A549 (cell line): ENCODE measurements at regions of chr3 and their contacts with region 1.

Region 1: GRCh38 chr3:45656575-45657363 is 32.4 kb upstream of the SACM1L start:
- DNase-seq: peak; percentile 87 to 95
- ATAC-seq: peak; percentile 89 to 91
- H3K4me3 ChIP-seq: no peak overlapping the region
- H3K27ac ChIP-seq: peak overlapping the region; percentile 71 to 86
- H3K4me1 ChIP-seq: peaks cover 64% of the 10 kb centered on the region
- CTCF ChIP-seq: peak; percentile 79
- EP300 ChIP-seq: no peak; a peak in 1 of 5 replicates
- POLR2A ChIP-seq: no peak
- RAD21 ChIP-seq: peak; percentile 93 to 96

Region 2: GRCh38 chr3:45507820-45508317 is 148.9 kb before region 1 on chr3:
- CTCF ChIA-PET with region 1: interaction called, 51 read pairs
- POLR2A ChIA-PET with region 1: no interaction called
- DNase-seq: peak in 1 of 2 experiments; percentile 27
- ATAC-seq: peak; percentile 69 to 82; a peak in 5 of 6 replicates
- H3K4me3 ChIP-seq: no peak overlapping the region
- H3K27ac ChIP-seq: no peak overlapping the region
- H3K4me1 ChIP-seq: 0 out of 3 replicates have a peak, but pooled peaks cover 7% of the 10 kb centered on the region
- CTCF ChIP-seq: no peak
- EP300 ChIP-seq: no peak
- POLR2A ChIP-seq: no peak
- RAD21 ChIP-seq: no peak; a peak in 1 of 5 replicates

Region 3: DNA sequence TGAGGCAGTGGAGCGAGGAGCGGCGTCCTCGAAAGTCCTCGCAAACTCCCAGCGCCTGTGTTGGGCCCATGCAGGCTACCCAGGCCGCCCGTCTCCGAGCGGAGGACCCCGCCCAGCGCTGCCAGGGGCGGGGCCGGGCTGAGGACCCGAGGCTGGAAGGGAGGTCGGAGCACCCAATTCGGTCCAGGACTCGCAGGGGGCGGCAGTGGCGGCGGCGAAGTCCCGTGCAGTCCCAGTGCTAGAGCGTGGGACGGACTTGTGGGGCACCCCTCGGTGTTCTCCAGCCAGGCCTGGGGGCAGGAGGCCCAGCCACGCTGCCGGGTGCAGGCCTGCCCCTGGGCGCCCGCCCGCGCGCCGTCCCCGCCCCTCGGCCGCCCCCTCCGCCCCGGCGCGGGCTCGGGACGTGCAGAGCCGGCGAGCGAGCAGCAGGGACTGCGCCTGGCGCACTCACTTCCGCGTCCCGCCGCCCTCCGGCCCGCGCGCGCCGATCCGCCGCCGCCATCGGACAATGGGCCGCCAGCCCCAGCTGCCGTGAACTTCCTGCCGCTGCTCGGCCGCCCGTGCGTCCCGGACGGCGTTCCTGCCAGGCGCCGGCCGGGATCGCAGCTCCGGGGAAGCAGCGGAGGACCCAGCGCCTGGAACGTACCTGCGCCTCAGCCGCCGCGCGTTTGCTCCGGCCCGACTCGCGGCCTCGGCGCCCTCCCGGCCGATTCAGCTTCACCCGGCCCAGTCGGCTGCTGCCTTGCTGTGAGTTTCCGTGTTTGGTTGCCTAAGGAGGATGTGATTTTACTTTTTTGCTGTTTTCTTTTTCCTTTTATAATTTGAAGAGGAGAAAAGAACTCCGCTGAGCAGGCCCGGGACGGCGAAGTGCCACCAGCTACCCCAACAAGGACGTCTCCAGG is 62.8 kb before region 1 on chr3:
- CTCF ChIA-PET with region 1: interaction called, 70 read pairs
- POLR2A ChIA-PET with region 1: interaction called, 5 read pairs
- DNase-seq: peak; percentile 56 to 80
- ATAC-seq: peak; percentile 84 to 86
- H3K4me3 ChIP-seq: peak overlapping the region; percentile 63
- H3K27ac ChIP-seq: peak overlapping the region; percentile 89 to 94
- H3K4me1 ChIP-seq: peaks cover 32% of the 10 kb centered on the region
- CTCF ChIP-seq: no peak
- EP300 ChIP-seq: no peak
- POLR2A ChIP-seq: peak; percentile 48
- RAD21 ChIP-seq: no peak

Region 4: DNA sequence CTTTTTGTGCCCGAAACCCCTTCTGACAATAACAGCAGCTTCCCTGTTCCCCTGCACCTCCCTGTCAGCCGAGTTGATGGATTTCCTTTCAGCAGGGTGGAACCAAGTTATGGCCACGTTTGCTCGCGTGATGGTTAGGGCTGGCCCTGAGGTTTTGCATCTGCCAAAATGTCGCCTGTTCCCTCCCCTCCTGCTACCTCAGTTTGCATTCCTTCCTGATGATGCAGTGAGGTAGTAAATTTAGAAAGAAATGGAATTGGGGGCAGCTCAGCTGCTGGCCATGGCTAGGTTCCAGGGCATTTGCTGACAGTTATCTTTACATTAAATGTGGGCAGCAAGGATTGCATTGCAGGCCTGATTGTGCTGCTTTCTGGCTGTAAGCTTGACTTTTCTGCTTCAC is 49.0 kb before region 1 on chr3:
- CTCF ChIA-PET with region 1: interaction called, 20 read pairs
- POLR2A ChIA-PET with region 1: no interaction called
- DNase-seq: no peak
- ATAC-seq: no peak
- H3K4me3 ChIP-seq: no peak overlapping the region
- H3K27ac ChIP-seq: peak overlapping the region in 1 of 2 experiments; percentile 5; a peak in 2 of 6 replicates
- H3K4me1 ChIP-seq: peaks cover 60% of the 10 kb centered on the region
- CTCF ChIP-seq: no peak
- EP300 ChIP-seq: no peak
- POLR2A ChIP-seq: no peak
- RAD21 ChIP-seq: no peak

Region 5: GRCh38 chr3:45618081-45618509 is 38.7 kb before region 1 on chr3:
- CTCF ChIA-PET with region 1: interaction called, 11 read pairs
- POLR2A ChIA-PET with region 1: interaction called, 8 read pairs
- DNase-seq: peak; percentile 77 to 93
- ATAC-seq: peak; percentile 91 to 93
- H3K4me3 ChIP-seq: peak overlapping the region; percentile 43
- H3K27ac ChIP-seq: peak overlapping the region; percentile 89 to 94
- H3K4me1 ChIP-seq: peaks cover 96% of the 10 kb centered on the region
- CTCF ChIP-seq: no peak
- EP300 ChIP-seq: peak; percentile 69 to 77; a peak in 3 of 5 replicates
- POLR2A ChIP-seq: no peak
- RAD21 ChIP-seq: 0 out of 5 replicates have a peak, but pooled peaks have one; percentile 17 to 21

Region 6: GRCh38 chr3:45760878-45761711 is 104.3 kb after region 1 on chr3:
- CTCF ChIA-PET with region 1: no interaction called
- POLR2A ChIA-PET with region 1: no interaction called
- DNase-seq: peak; percentile 64 to 71
- ATAC-seq: peak; percentile 95 to 97
- H3K4me3 ChIP-seq: no peak overlapping the region
- H3K27ac ChIP-seq: no peak overlapping the region
- H3K4me1 ChIP-seq: no peaks in the 10 kb centered on the region
- CTCF ChIP-seq: peak; percentile 63
- EP300 ChIP-seq: no peak
- POLR2A ChIP-seq: no peak
- RAD21 ChIP-seq: peak; percentile 73 to 79